ENCODE measurements at regions of chr7 and their contacts with region 1.

Region 1: DNA sequence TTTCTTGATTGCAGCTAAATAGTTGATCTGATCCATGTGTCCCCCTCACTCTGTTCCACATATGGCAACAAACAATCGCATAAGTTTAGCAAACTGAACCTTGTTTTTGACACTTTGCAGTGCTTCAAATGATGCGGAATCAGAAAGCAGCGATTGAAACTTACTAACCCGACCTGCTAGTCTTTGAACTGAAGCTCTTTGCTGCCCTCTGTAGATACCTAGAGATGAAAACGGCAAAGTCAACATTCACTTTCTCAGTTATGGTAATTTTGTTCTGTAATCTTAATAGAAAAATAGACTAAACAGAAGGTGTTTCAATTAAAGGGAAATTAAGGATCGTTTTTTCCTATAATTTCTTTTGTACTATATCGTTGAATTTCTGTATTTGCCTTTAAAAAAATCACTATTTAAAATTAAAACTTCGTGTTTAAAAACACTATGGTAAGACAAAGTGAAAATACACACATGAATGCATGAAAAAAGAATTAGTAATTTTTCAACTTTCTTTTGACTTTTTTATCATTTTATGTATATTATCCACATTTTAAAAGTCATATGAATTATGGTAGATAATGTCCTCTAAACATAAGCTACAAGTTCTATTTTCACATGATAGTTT is 276.5 kb downstream of the MAGI2 start:
- DNase-seq: peak; percentile 34
- H3K4me3 ChIP-seq: no peak overlapping the region
- H3K27ac ChIP-seq: no peak overlapping the region
- H3K4me1 ChIP-seq: peaks cover under 1% of the 10 kb centered on the region
- H3K27me3 ChIP-seq: no peaks in the 10 kb centered on the region
- CTCF ChIP-seq: peak; percentile 68 to 76

Region 2: DNA sequence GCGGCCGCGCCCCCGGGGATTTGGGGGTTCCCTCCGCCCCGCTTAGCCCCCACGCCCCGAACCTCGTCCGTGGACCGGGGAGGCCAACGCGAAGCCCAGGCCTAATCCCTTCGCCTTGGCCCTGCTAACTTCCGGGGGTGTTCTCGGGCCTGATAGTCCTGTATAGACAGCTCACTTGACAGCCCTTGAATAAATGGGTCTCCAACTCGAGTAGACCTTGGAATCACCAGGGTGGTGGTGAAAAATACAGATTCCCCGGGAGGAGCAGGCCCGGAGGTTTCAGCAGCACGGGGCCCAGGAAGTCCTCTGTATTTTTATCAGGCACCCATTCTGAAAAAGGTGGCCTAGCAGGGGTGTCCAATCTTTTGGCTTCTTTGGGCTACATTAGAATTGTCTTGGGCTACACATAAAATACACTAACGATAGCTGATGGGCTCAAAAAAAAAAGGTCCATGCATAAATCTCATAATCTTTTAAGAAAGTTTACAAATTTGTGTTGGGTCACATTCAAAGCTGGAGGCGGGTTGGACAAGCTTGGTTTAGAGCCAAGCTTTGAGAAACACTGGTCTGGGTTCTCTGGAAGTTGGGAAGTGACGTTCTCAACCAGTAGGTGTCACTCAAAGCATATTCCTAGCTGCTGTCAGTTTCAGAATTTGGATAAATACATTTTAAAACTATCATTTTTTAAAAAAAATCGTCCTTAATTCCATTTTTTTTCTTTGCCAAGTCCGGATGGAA is 1156.7 kb before region 1 on chr7:
- CTCF ChIA-PET with region 1: no interaction called
- dilution Hi-C with region 1: no loop called
- in situ Hi-C with region 1: no loop called
- intact Hi-C with region 1: loop called (anchors 5 kb)
- DNase-seq: peak; percentile 60
- H3K4me3 ChIP-seq: peak overlapping the region in 1 of 3 experiments; percentile 53
- H3K27ac ChIP-seq: no peak overlapping the region
- H3K4me1 ChIP-seq: peaks cover 7% of the 10 kb centered on the region
- H3K27me3 ChIP-seq: peaks cover under 1% of the 10 kb centered on the region
- CTCF ChIP-seq: peak; percentile 65 to 77

Region 3: DNA sequence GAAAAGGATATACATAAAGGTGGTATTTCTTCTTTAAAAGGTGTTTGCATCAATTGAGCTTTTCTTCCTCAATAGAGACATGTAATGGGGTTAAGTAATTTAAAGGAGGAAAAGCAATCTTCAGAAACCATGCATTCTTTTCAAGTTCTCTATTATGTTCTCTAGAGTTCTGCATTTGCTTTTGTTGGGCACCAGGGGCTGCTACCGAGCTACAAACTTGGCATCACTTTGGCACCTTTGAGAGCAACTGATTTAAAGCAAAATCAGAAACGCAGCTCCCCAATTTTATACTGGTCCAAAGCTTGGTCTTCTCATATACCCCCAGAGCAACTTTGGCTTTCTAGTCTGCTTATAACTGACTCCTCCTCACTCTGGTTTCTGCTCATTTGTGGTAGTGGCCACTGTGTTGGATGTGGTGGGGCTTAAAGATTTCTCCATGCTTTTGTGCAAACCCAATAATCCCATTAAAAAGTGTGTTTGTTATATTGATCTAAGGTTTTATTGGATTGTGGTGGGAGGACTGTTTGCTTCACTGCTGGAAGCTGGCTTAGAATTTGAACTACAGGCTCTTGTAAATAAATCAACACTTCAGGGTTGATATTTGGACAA is 666.3 kb before region 1 on chr7:
- CTCF ChIA-PET with region 1: no interaction called
- dilution Hi-C with region 1: no loop called
- in situ Hi-C with region 1: no loop called
- intact Hi-C with region 1: loop called (anchors 2 kb)
- DNase-seq: peak; percentile 15
- H3K4me3 ChIP-seq: no peak overlapping the region
- H3K27ac ChIP-seq: no peak overlapping the region
- H3K4me1 ChIP-seq: no peaks in the 10 kb centered on the region
- H3K27me3 ChIP-seq: no peaks in the 10 kb centered on the region
- CTCF ChIP-seq: peak; percentile 82 to 90

Region 4: GRCh38 chr7:78607099-78607498 is 569.9 kb before region 1 on chr7:
- CTCF ChIA-PET with region 1: no interaction called
- dilution Hi-C with region 1: no loop called
- in situ Hi-C with region 1: no loop called
- intact Hi-C with region 1: loop called (anchors 2 kb)
- DNase-seq: no peak
- H3K4me3 ChIP-seq: no peak overlapping the region
- H3K27ac ChIP-seq: no peak overlapping the region
- H3K4me1 ChIP-seq: no peaks in the 10 kb centered on the region
- H3K27me3 ChIP-seq: no peaks in the 10 kb centered on the region
- CTCF ChIP-seq: peak; percentile 37 to 59

Region 5: GRCh38 chr7:78939669-78940068 is 237.3 kb before region 1 on chr7:
- CTCF ChIA-PET with region 1: no interaction called
- dilution Hi-C with region 1: no loop called
- in situ Hi-C with region 1: no loop called
- intact Hi-C with region 1: loop called (anchors 5 kb)
- DNase-seq: no peak
- H3K4me3 ChIP-seq: no peak overlapping the region
- H3K27ac ChIP-seq: no peak overlapping the region
- H3K4me1 ChIP-seq: no peaks in the 10 kb centered on the region
- H3K27me3 ChIP-seq: no peaks in the 10 kb centered on the region
- CTCF ChIP-seq: no peak

Measured in mammary epithelial cell (primary cell).